Activated T-helper 1 cell treated with anti-CD3 and anti-CD28 coated beads, Interleukin-12 subunit alpha, Interleukin-12 subunit beta, Interleukin-2, Interleukin-4 antibody, amounts not matched to agents 30 ng/mL and 10 ng/mL and 1 ng/mL, durations not matched to agents 14 hours and 24 hours and 36 hours (primary cell): ENCODE measurements at regions of chr16 and their contacts with region 1.

Region 1: GRCh38 chr16:2459647-2460390 is at the start of gene TEDC2:
- DNase-seq: peak; percentile 96
- H3K4me3 Mint-ChIP-seq: peak within 1 kb of the TSS; percentile 86
- H3K27ac Mint-ChIP-seq: peak within 1 kb of the TSS; percentile 80
- H3K4me1 Mint-ChIP-seq: peaks cover 7% of the 10 kb centered on the region
- H3K27me3 Mint-ChIP-seq: no peaks in the 10 kb centered on the region
- total RNA-seq, gene TEDC2: 41.0 and 43.9 TPM in 2 replicates

Region 2: DNA sequence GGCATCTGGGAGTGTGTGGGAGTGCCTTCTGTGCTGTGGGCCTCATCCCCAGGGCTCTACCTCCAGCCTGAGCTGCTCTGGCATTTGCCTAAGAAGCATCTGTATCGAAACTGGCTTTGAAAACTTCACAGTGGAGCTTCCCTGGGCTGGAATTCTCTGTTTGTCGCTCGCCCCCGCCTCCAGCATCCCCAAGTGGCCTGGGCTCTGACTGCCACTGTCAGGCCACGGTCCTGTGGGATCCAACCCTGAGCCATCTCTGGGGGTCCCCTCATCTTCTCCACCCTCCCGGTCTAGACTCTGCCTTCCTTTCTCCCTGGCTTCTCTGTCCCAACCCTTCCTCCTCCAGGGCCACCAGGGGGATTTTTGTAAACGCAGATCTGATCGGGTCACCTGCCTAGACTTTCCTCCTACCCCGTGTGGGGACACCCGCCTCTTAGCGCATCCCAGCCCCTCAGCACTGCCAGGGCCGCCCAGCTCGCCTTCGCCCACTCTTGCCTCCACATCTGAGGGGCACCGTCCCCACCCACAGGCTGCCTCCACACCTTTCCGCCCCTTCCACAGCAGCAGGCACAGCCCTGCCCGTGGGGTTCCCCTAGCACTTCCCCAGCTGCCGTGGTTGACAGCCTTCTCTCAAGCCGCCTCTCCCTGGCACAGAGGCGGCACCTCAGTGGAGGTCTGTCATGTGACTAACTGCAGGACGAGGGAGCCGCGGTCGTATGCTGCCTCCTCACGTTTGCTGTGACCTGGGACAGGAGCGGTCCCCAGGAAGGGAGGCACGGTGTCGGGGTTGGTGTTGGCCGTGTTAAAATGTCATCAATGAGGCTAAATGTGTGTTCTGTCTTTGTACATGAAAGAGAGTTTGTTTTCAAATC is 27.1 kb after region 1 on chr16:
- intact Hi-C with region 1: loop called (anchors 1 kb)
- DNase-seq: peak; percentile 65
- H3K4me3 Mint-ChIP-seq: peak overlapping the region; percentile 9
- H3K27ac Mint-ChIP-seq: peak overlapping the region; percentile 65
- H3K4me1 Mint-ChIP-seq: peaks cover 14% of the 10 kb centered on the region
- H3K27me3 Mint-ChIP-seq: no peaks in the 10 kb centered on the region